ENCODE measurements at regions of chr2 and their contacts with region 1.

Region 1: GRCh38 chr2:209577376-209578357 is 153.8 kb downstream of the MAP2 start:
- DNase-seq: no peak
- H3K4me3 ChIP-seq: no peak overlapping the region
- H3K27ac ChIP-seq: no peak overlapping the region
- H3K4me1 ChIP-seq: no peaks in the 10 kb centered on the region
- H3K27me3 ChIP-seq: no peaks in the 10 kb centered on the region
- CTCF ChIP-seq: peak in 1 of 4 experiments; percentile 31
- EP300 ChIP-seq: no peak
- POLR2A ChIP-seq: no peak

Region 2: GRCh38 chr2:209334198-209335017 is 243.3 kb before region 1 on chr2:
- intact Hi-C with region 1: loop called (anchors 10 kb)
- DNase-seq: no peak
- H3K4me3 ChIP-seq: no peak overlapping the region
- H3K27ac ChIP-seq: no peak overlapping the region
- H3K4me1 ChIP-seq: peaks cover 0 to 5% (median 2%) of the 10 kb centered on the region in 4 donors
- H3K27me3 ChIP-seq: no peaks in the 10 kb centered on the region
- CTCF ChIP-seq: peak in 3 of 4 experiments; percentile 49 to 81 (median 55)
- EP300 ChIP-seq: no peak
- POLR2A ChIP-seq: no peak

Measured in sigmoid colon (tissue), 7 donors.